ENCODE measurements at regions of chr3 and their contacts with region 1.

Region 1: DNA sequence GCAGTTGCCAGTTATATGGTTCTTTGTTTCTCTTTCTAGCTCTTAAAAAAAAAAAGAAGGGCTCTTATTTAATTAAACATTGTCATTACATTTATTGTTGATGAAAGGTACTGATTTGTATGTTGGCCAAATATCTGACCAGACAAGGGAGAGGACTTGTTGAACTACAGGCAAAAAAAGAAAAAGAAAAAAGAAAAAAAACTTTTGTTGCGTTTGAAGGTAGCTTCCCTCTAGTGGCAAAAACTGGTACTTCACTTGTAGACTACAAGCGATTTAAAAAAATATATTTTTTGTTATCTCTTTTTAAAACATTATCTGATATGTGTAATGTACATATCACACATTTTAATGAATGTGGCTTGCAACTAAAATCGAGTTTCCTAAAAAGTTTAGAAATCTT is 280.6 kb downstream of the ROBO2 start:
- DNase-seq: peak; percentile 22
- H3K4me3 ChIP-seq: no peak overlapping the region
- H3K27ac ChIP-seq: no peak overlapping the region
- H3K4me1 ChIP-seq: no peaks in the 10 kb centered on the region
- H3K27me3 ChIP-seq: no peaks in the 10 kb centered on the region
- CTCF ChIP-seq: peak; percentile 38 to 39
- POLR2A ChIP-seq: no peak

Region 2: GRCh38 chr3:77038468-77038929 is 282.0 kb before region 1 on chr3:
- CTCF ChIA-PET with region 1: interaction called, 25 read pairs
- POLR2A ChIA-PET with region 1: no interaction called
- dilution Hi-C with region 1: no loop called
- intact Hi-C with region 1: loop called (anchors 1 kb)
- DNase-seq: peak; percentile 67
- H3K4me3 ChIP-seq: peak overlapping the region in 1 of 3 experiments; percentile 21
- H3K27ac ChIP-seq: no peak overlapping the region
- H3K4me1 ChIP-seq: peaks cover 11% of the 10 kb centered on the region
- H3K27me3 ChIP-seq: peaks cover 17 to 26% of the 10 kb centered on the region in 2 experiments
- CTCF ChIP-seq: peak; percentile 32 to 51
- POLR2A ChIP-seq: no peak

Region 3: GRCh38 chr3:77309460-77309859 is 11.1 kb before region 1 on chr3:
- CTCF ChIA-PET with region 1: interaction called, 19 read pairs
- POLR2A ChIA-PET with region 1: no interaction called
- dilution Hi-C with region 1: no loop called
- intact Hi-C with region 1: no loop called
- DNase-seq: no peak
- H3K4me3 ChIP-seq: no peak overlapping the region
- H3K27ac ChIP-seq: no peak overlapping the region
- H3K4me1 ChIP-seq: no peaks in the 10 kb centered on the region
- H3K27me3 ChIP-seq: no peaks in the 10 kb centered on the region
- CTCF ChIP-seq: no peak
- POLR2A ChIP-seq: no peak

Region 4: GRCh38 chr3:77342688-77343087 is 22.2 kb after region 1 on chr3:
- CTCF ChIA-PET with region 1: interaction called, 19 read pairs
- POLR2A ChIA-PET with region 1: no interaction called
- dilution Hi-C with region 1: no loop called
- intact Hi-C with region 1: no loop called
- DNase-seq: no peak
- H3K4me3 ChIP-seq: no peak overlapping the region
- H3K27ac ChIP-seq: no peak overlapping the region
- H3K4me1 ChIP-seq: no peaks in the 10 kb centered on the region
- H3K27me3 ChIP-seq: no peaks in the 10 kb centered on the region
- CTCF ChIP-seq: no peak
- POLR2A ChIP-seq: no peak

Measured in endothelial cell of umbilical vein (primary cell).